CD14-positive monocyte (primary cell): ENCODE measurements at regions of chr2 and their contacts with region 1.

Region 1: GRCh38 chr2:142892715-142893114 is 15.3 kb downstream of the KYNU start:
- DNase-seq: no peak
- H3K4me3 ChIP-seq: no peak overlapping the region
- H3K4me3 Mint-ChIP-seq: no peak overlapping the region
- H3K27ac ChIP-seq: peak overlapping the region in 1 of 2 donors; percentile 30
- H3K27ac Mint-ChIP-seq: peak overlapping the region in 3 of 7 donors; percentile 24 to 58 (median 30)
- H3K4me1 ChIP-seq: no peaks in the 10 kb centered on the region
- H3K4me1 Mint-ChIP-seq: peaks cover 6% of the 10 kb centered on the region
- H3K27me3 ChIP-seq: no peaks in the 10 kb centered on the region
- H3K27me3 Mint-ChIP-seq: no peaks in the 10 kb centered on the region
- CTCF ChIP-seq: no peak

Region 2: DNA sequence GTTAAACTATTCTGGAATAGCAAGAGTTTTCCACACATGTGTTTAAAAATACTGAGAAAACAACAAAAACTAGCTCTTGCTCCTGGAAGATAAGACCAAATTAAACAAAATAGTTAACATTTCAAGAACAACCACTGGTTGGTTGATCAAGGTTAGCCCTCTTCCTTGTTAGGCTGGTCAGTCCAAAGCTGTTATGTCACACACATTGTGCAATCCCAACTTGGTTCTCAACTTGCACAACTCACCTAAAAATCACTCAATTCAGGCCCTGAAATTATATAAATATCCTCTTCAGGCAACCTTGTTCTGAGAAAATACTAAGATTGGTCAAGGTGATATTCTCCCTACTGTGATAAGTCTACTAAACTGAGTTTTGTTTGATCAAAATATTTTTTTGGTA is 592.2 kb before region 1 on chr2:
- intact Hi-C with region 1: no loop called
- DNase-seq: no peak
- H3K4me3 ChIP-seq: no peak overlapping the region
- H3K4me3 Mint-ChIP-seq: no peak overlapping the region
- H3K27ac ChIP-seq: no peak overlapping the region
- H3K27ac Mint-ChIP-seq: no peak overlapping the region
- H3K4me1 ChIP-seq: no peaks in the 10 kb centered on the region
- H3K4me1 Mint-ChIP-seq: no peaks in the 10 kb centered on the region
- H3K27me3 ChIP-seq: no peaks in the 10 kb centered on the region
- H3K27me3 Mint-ChIP-seq: peaks cover 0 to 2% (median 2%) of the 10 kb centered on the region in 3 donors
- CTCF ChIP-seq: no peak

Region 3: GRCh38 chr2:142796161-142796560 is 96.6 kb before region 1 on chr2:
- intact Hi-C with region 1: no loop called
- DNase-seq: no peak
- H3K4me3 ChIP-seq: no peak overlapping the region
- H3K4me3 Mint-ChIP-seq: no peak overlapping the region
- H3K27ac ChIP-seq: no peak overlapping the region
- H3K27ac Mint-ChIP-seq: no peak overlapping the region
- H3K4me1 ChIP-seq: no peaks in the 10 kb centered on the region
- H3K4me1 Mint-ChIP-seq: peaks cover 6% of the 10 kb centered on the region
- H3K27me3 ChIP-seq: no peaks in the 10 kb centered on the region
- H3K27me3 Mint-ChIP-seq: no peaks in the 10 kb centered on the region
- CTCF ChIP-seq: no peak

Region 4: DNA sequence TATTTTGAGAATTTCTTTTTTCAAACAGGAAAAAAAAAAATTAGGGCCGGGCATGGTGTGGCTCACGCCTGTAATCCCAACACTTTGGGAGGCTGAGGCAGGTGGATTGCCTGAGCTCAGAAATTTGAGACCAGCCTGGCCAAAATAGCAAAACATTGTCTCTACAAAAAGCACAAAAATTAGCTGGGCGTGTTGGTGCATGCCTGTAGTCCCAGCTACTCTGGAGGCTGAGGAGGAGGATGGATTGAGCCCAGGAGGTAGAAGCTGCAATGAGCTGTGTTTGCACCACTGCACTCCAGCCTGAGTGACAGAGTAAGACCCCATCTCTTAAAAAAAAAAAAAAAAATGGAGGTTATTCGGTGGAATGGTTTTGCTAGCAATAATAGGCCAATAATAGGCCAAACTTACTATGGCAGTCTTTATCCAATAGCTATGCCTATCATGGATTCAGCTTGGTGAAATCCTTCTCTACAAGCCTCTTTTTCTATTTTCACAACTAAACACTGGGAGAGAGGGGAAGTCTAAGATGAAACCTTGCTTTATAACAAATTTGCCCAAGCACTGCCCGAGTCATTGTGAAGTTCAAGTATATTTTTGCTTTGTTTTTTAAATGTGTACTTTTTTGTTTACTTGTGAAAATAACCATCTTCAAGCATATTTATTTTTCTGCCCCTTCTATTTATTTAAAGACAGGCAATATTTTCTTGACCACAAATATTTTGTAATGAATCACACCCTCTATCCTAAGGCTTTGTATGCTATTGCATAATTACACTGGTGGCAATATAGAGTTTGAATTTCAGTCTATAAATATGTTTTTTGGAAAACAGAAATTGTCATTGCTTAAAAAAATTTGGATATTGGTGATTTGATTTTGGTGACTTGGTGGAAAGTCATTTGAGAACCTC is 35.2 kb before region 1 on chr2:
- intact Hi-C with region 1: loop called in 1 of 2 experiments (anchors 5 kb)
- DNase-seq: peak in 2 of 3 donors; percentile 34 to 41
- H3K4me3 ChIP-seq: peak overlapping the region in 1 of 3 experiments; percentile 26
- H3K4me3 Mint-ChIP-seq: peak overlapping the region in 1 of 2 donors; percentile 15
- H3K27ac ChIP-seq: peak overlapping the region in 1 of 2 donors; percentile 70
- H3K27ac Mint-ChIP-seq: peak overlapping the region; percentile 41 to 84 (median 74)
- H3K4me1 ChIP-seq: peaks cover 15 to 29% of the 10 kb centered on the region in 2 donors
- H3K4me1 Mint-ChIP-seq: peaks cover 31% of the 10 kb centered on the region
- H3K27me3 ChIP-seq: peaks cover 0 to 3% of the 10 kb centered on the region in 2 donors
- H3K27me3 Mint-ChIP-seq: peaks cover 2 to 6% (median 3%) of the 10 kb centered on the region in 3 donors
- CTCF ChIP-seq: no peak